ENCODE measurements at regions of chr3 and their contacts with region 1.

Region 1: DNA sequence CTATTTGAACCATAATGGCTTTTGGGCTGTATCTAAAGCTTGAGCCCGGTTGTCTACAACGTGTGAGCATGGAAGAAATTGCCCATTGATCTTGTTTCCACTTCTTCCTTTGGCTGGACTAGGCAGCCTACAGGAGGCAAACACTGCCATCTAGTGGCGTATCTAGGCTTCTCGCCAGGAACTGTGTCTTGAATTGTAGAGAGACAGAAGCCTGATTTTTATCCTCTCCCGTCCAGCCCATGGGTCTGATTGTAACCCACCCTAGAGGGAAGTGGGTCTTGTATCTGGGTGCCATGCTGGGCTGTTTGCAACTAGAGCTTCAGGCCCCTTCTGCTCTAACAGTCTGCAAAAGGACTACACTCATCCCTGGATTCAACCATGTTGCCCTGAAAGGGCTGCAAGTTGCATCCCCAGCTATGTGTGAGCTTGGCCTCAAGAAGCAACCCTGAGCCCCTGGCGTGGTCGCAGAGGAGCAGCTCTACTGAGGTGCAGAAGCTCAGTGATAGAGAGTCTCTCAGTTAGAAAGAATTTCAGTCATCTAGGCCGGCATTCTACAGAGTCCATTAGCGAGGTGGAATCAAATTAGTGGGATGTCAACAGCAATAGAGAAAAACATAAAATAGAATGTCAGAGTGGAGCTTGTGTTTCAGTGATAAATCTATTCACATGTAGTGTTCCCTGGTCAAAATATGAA is 170.2 kb upstream of the UMPS start:
- DNase-seq: peak; percentile 38
- H3K4me3 ChIP-seq: no peak overlapping the region
- CTCF ChIP-seq: peak; percentile 85

Region 2: DNA sequence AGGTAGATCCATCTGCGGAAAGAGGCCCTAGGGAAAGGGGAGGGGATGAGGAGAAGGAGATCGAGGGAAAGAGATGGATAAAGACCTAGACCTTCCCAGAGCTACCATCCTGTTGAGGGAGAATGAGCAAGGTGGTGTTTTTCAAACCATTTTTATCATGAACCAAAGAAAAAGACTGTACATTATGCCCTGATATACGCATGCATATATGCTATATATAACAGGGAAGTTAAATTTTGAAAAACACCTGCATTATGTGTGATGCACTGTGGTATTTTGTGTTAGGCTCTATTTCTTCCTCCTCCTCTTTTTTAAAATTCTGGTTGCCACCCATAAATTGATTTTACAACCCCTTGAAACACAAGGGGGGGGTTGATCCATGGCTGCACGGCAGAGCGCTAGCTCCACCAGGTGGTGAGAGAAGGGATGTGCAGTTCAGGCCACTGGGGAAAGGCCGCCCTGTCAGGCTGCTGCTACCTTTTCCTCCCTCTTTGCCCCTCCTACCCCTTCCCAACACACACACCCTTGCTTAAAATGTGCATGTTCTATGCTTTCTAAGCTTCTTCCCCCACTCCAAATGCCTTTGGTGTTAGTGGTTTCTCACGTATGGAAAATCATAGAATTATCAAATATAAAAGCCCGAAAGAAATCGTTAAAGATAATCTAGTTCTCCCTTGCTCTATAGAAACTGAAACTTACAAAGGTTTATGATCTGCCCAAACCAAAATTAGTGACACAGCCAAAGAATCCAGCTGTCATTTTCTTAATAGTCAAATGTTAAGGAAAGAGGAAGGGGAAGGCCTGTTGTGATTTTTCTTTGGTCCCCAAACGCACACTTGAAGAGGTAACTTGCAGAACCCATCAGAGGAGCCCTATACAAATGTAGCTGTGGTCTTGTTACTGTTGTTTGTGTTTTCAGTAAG is 91.8 kb before region 1 on chr3:
- CTCF ChIA-PET with region 1: interaction called, 10 read pairs
- POLR2A ChIA-PET with region 1: no interaction called
- DNase-seq: no peak
- H3K4me3 ChIP-seq: no peak overlapping the region
- CTCF ChIP-seq: peak; percentile 99

Region 3: GRCh38 chr3:124512881-124513609 is 47.0 kb before region 1 on chr3:
- CTCF ChIA-PET with region 1: interaction called, 15 read pairs
- POLR2A ChIA-PET with region 1: no interaction called
- DNase-seq: no peak
- H3K4me3 ChIP-seq: no peak overlapping the region
- CTCF ChIP-seq: no peak

Region 4: GRCh38 chr3:124584552-124585391 is 24.7 kb after region 1 on chr3:
- CTCF ChIA-PET with region 1: interaction called, 21 read pairs
- POLR2A ChIA-PET with region 1: no interaction called
- DNase-seq: no peak
- H3K4me3 ChIP-seq: peak overlapping the region; percentile 58
- CTCF ChIP-seq: no peak

Region 5: GRCh38 chr3:124688581-124689454 is 128.8 kb after region 1 on chr3:
- CTCF ChIA-PET with region 1: interaction called, 776 read pairs
- POLR2A ChIA-PET with region 1: no interaction called
- DNase-seq: no peak
- H3K4me3 ChIP-seq: no peak overlapping the region
- CTCF ChIP-seq: peak; percentile 76

Region 6: GRCh38 chr3:124761250-124761796 is 201.3 kb after region 1 on chr3:
- CTCF ChIA-PET with region 1: interaction called, 43 read pairs
- POLR2A ChIA-PET with region 1: no interaction called
- DNase-seq: peak; percentile 57
- H3K4me3 ChIP-seq: no peak overlapping the region
- CTCF ChIP-seq: peak; percentile 89